ENCODE measurements at regions of chr20 and their contacts with region 1.

Region 1: GRCh38 chr20:33731693-33732165 is at the start of gene ZNF341:
- DNase-seq: peak; percentile 95
- total RNA-seq, gene ZNF341: 1.3 TPM

Region 2: DNA sequence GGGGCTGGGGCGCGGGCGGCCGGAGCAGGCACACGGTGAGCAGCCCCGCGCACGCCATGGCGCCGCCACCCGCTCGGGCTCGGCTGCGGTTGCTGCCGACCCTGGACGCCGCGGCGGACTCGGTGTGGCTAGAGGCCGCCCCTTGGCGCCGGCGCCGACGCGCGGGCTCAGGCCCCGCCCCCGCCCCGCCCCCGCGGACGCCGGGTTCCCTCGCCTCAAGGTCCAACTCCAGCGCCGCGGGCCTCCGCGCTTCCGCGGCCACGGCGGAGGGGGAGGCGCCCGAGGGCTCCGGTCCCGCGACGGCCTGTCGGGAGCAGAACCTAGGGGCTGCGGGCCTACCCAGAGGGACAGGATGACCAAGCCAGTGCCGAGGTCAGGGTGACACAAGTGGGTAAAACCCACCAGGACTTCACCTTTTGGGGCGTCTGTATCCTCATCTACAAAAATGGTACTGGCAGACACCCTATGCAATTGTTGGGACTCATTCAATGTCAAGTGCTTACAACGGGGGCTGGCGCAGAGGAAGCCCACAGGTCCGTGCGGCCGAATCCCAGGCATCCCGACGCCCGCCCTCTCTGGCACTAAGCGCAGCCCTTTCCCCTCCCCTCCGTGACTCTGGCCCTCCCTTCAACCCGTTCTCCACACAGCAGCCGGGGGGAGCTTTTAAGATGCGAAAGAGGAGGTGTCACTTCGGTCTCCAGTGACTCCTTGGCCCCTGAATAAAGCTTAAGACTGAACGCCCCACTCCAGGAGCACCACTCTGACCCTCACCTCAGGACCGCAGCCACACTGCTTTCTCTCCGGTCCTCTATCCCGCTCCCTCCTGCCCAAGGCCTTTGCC is 57.2 kb before region 1 on chr20 and contains the start of gene NECAB3:
- intact Hi-C with region 1: loop called (anchors 2 kb)
- DNase-seq: peak; percentile 91
- total RNA-seq, gene NECAB3: 77.0 TPM

Region 3: DNA sequence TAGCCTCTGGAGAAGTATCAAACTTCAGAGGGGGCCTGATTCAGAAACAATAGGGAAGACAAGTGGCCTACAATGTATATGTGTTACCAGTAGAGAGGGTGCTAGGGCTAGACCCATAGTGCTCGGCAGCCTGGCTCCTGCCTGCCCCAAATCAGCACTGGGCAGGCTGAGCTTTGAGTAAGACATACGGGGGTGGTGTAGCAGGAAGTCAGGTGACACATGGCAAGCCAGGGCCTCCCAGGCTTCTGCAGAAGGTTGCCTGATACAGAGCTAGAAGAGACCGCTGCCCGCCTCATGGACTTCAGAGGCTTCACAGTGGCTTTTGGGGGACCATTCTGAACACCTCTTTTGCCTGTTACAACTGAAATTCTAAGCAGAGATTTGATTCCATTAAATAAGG is 305.4 kb after region 1 on chr20:
- intact Hi-C with region 1: no loop called
- DNase-seq: no peak

Measured in cardiac septum (tissue), 1 donor.